GM12878 (cell line): ENCODE measurements at regions of chr10 and their contacts with region 1.

Region 1: DNA sequence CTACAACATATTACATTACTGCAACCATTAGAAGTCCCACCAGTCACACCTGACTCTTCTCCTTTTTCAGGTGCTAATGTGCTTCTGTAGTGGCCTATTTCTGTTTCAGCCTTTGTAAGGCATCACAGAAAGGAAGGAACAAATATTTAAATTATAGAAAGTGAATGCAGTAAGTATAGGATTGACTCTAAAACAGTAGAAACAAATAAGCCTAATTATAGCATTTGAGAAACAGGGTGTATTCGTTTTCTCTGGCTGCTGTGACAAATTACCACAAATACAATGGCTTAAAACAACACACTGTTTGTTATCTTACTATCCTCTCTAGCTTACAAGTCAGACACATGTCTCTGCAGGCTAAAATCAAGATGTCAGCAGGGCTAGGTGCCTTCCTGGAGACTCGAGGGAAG is 69.4 kb downstream of the CCSER2 start:
- DNase-seq: no peak
- ATAC-seq: peak; percentile 62
- H3K4me3 ChIP-seq: no peak overlapping the region
- H3K27ac ChIP-seq: no peak overlapping the region
- H3K4me1 ChIP-seq: 0 out of 2 replicates have a peak, but pooled peaks cover 6% of the 10 kb centered on the region
- H3K27me3 ChIP-seq: no peaks in the 10 kb centered on the region
- CTCF ChIP-seq: no peak
- EP300 ChIP-seq: no peak
- POLR2A ChIP-seq: no peak
- RAD21 ChIP-seq: no peak

Region 2: DNA sequence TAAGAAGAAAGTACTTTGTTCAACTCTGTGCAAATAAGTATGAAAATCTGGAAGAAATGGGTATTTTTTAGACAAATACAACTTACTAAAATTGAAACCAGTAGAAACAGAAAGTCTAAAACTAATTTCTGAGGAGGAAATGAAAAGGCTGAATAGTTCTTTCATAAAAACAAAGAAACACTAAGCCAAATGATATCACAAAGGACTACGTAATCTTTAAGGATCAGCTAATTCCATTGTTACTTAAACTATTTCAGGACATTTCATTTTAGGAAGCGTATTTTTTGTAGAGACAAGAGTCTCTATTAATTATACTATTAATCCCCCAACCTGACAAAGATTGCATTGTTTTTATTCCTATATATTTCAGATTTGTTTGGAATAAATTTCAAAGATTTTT is 80.6 kb before region 1 on chr10:
- CTCF ChIA-PET with region 1: no interaction called
- POLR2A ChIA-PET with region 1: no interaction called
- RAD21 ChIA-PET with region 1: no interaction called
- SMC1A ChIA-PET with region 1: no interaction called
- in situ Hi-C with region 1: no loop called
- intact Hi-C with region 1: no loop called
- DNase-seq: no peak
- ATAC-seq: peak; percentile 93
- H3K4me3 ChIP-seq: no peak overlapping the region; the same call in 1 of the 2 replicates
- H3K27ac ChIP-seq: no peak overlapping the region
- H3K4me1 ChIP-seq: peaks cover 4% of the 10 kb centered on the region
- H3K27me3 ChIP-seq: no peaks in the 10 kb centered on the region
- CTCF ChIP-seq: no peak
- EP300 ChIP-seq: peak; percentile 44 to 72; a peak in 3 of 4 replicates
- POLR2A ChIP-seq: no peak
- RAD21 ChIP-seq: no peak

Region 3: DNA sequence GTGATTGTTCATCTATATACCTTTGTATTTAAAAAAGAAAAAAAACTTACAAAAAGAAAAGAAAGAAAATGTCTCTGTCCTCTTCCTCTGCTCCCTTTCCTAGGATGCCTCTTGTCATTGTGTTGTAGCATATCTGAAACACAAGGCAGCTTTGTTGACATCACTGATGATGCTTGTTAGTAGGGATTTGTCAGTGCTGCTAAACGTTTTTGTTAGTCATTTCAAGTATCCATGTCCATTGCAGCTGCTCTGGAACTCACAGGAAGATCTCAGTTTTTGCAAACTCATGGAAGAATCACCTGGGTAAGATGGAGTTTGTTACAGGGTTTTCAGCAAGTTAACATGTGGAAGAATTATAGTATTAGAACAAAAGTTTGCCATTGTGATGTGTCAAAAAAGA is 54.3 kb after region 1 on chr10:
- CTCF ChIA-PET with region 1: no interaction called
- POLR2A ChIA-PET with region 1: no interaction called
- RAD21 ChIA-PET with region 1: no interaction called
- SMC1A ChIA-PET with region 1: no interaction called
- in situ Hi-C with region 1: no loop called
- intact Hi-C with region 1: loop called (anchors 5 kb)
- DNase-seq: no peak
- ATAC-seq: no peak
- H3K4me3 ChIP-seq: no peak overlapping the region
- H3K27ac ChIP-seq: no peak overlapping the region
- H3K4me1 ChIP-seq: no peaks in the 10 kb centered on the region
- H3K27me3 ChIP-seq: no peaks in the 10 kb centered on the region
- CTCF ChIP-seq: no peak
- EP300 ChIP-seq: no peak
- POLR2A ChIP-seq: no peak
- RAD21 ChIP-seq: no peak

Region 4: DNA sequence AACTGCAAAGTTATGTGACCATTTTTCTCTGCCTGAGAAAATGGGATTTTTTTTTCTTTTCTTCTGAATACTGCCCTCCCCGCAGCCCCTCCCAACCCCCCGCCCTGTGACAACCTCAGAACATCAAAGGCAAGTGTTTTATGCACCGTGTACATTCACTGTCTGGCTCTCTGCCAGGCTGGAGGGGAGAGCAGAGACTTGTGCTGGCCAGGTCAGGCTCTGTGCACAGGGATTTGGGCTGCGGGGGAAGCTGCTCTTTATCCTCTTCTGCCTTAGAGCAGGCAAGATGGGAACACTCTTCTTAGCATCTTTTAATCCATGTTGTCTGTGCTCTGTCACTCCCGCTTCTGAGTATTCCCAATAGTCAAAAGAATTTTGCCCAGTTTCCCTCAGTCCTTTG is 125.8 kb after region 1 on chr10:
- CTCF ChIA-PET with region 1: no interaction called
- POLR2A ChIA-PET with region 1: no interaction called
- RAD21 ChIA-PET with region 1: no interaction called
- SMC1A ChIA-PET with region 1: no interaction called
- in situ Hi-C with region 1: no loop called
- intact Hi-C with region 1: no loop called
- DNase-seq: no peak
- ATAC-seq: no peak
- H3K4me3 ChIP-seq: no peak overlapping the region
- H3K27ac ChIP-seq: no peak overlapping the region
- H3K4me1 ChIP-seq: no peaks in the 10 kb centered on the region
- H3K27me3 ChIP-seq: no peaks in the 10 kb centered on the region
- CTCF ChIP-seq: no peak
- EP300 ChIP-seq: no peak
- POLR2A ChIP-seq: no peak
- RAD21 ChIP-seq: no peak